Head of caudate nucleus (tissue), 42 donors: ENCODE measurements at regions of chr1 and their contacts with region 1.

Region 1: DNA sequence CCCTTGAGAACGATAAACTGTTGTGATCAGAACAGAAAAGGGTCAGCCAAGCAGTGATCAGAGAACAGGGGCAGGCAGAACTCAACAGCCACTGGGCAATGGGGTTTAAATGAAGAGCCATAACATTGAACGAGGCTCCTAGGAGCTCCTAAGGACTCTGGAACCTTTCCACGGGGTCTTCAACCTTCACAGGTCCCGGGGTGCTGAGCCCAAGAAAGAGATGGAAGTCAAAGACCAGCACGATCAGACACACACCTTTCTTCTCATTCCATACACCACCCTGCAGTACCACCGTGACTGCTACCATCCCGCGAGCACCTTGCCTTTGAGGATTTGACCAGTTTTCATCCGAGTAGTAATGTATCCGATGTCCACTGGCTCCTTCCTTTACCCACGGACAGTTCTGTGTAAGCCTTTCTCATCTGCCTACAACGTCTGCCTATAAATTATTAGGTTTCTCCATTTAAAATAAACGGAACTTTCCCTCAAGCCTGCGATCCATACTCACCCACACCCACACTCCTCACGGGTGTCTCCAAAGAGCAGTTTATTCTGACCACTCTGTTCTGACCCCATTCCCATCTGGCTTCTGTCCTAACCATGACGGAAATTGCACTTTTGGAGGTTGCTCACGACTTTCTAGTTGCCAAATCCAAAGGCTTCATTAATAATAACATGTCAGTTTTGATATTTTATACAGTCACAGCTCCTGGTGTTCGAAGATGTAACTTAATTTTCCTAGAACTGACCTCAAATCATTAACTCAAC is 16.8 kb upstream of the HHAT start:
- DNase-seq: no peak

Region 2: GRCh38 chr1:210143465-210144062 is 168.3 kb before region 1 on chr1:
- intact Hi-C with region 1: loop called (anchors 2 kb)
- DNase-seq: peak in 41 of 42 donors; percentile 16 to 91 (median 72)

Region 3: GRCh38 chr1:210159206-210159605 is 152.7 kb before region 1 on chr1:
- intact Hi-C with region 1: no loop called
- DNase-seq: no peak